ENCODE measurements at regions of chr1 and their contacts with region 1.

Region 1: GRCh38 chr1:164051782-164052181 is 507.2 kb upstream of the PBX1 start:
- DNase-seq: no peak
- H3K4me3 ChIP-seq: no peak overlapping the region
- H3K27ac ChIP-seq: no peak overlapping the region
- H3K4me1 ChIP-seq: no peaks in the 10 kb centered on the region
- H3K27me3 ChIP-seq: no peaks in the 10 kb centered on the region
- CTCF ChIP-seq: no peak
- EP300 ChIP-seq: no peak
- POLR2A ChIP-seq: no peak

Region 2: GRCh38 chr1:163914785-163915413 is 136.9 kb before region 1 on chr1:
- in situ Hi-C with region 1: no loop called
- intact Hi-C with region 1: no loop called
- DNase-seq: no peak
- H3K4me3 ChIP-seq: no peak overlapping the region
- H3K27ac ChIP-seq: no peak overlapping the region
- H3K4me1 ChIP-seq: no peaks in the 10 kb centered on the region
- H3K27me3 ChIP-seq: no peaks in the 10 kb centered on the region
- CTCF ChIP-seq: no peak
- EP300 ChIP-seq: no peak
- POLR2A ChIP-seq: no peak

Region 3: DNA sequence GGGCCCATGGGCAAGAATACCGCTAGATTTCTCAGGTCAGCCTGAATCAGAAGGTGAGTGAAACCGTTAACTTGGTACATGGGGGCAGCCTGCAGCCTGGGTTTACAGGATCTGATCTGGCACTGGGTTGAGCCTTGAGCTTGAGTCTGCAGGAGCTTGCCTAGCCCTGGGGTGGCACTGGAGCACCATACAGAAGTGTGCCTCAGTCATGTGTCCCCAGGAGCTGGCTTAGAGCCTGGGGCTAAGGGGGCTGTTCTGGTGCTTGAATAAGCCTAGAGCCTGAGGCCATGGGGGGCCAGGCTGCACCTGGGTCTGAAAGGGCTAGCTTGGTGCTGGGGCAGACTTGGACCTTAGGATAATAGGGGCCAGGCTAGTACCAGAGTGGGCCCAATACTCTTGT is 50.0 kb after region 1 on chr1:
- in situ Hi-C with region 1: no loop called
- intact Hi-C with region 1: no loop called
- DNase-seq: no peak
- H3K4me3 ChIP-seq: no peak overlapping the region
- H3K27ac ChIP-seq: no peak overlapping the region
- H3K4me1 ChIP-seq: no peaks in the 10 kb centered on the region
- H3K27me3 ChIP-seq: no peaks in the 10 kb centered on the region
- CTCF ChIP-seq: no peak
- EP300 ChIP-seq: no peak
- POLR2A ChIP-seq: no peak

Region 4: GRCh38 chr1:164625001-164625617 is 573.3 kb after region 1 on chr1:
- in situ Hi-C with region 1: no loop called
- intact Hi-C with region 1: loop called (anchors 5 kb)
- DNase-seq: no peak
- H3K4me3 ChIP-seq: no peak overlapping the region
- H3K27ac ChIP-seq: no peak overlapping the region
- H3K4me1 ChIP-seq: peaks cover 22 to 52% (median 24%) of the 10 kb centered on the region in 4 donors
- H3K27me3 ChIP-seq: no peaks in the 10 kb centered on the region
- CTCF ChIP-seq: peak; percentile 20 to 50 (median 37)
- EP300 ChIP-seq: no peak
- POLR2A ChIP-seq: no peak